ENCODE measurements at regions of chr1 and their contacts with region 1.

Region 1: DNA sequence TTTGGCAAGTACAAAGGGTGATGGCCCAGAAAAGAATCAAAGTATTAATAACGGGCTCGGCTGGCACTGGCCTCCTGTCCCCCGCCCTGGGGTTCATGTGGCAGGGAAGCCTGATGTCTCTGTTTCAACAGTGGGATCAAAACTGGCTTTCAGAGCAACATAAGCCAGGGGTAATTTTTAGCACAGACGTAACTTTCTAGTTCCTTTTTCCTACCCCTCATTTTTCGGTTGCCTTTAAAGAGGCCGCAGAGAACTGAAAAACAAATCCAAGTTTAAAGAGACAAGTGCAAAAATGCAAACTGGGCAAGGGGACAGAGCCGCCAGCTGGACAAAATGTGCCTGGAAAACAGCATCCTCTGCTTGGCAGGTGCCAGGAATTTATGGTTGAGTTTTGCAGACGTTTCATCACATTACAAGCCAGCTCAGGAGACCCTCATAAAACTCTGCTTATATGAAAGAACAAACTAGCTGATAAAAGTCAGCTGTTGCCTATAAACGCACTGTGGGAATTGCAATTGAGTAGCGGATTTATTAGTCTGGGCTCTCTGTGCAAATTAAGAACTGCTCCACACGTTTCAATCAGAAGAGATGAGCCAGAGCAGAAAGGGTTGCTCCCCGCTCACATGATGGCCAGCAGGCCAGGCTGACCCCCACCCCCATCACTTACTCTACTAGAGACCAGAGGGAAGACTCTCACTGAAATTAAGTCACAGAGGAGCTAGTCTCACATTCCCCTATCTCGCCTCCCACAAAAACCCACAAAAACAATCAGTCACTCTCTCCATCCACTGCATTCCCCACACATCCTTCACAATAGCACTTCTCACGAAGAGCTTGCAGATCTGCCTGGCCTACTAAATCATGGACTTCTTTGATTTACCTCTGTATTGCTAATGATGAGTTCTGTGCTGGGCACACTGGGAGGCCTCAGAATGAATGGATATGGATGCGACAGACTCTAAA is 15.8 kb upstream of the CDCA8 start:
- DNase-seq: no peak
- ATAC-seq: no peak
- H3K4me3 ChIP-seq: no peak overlapping the region
- H3K27ac ChIP-seq: no peak overlapping the region
- H3K4me1 ChIP-seq: no peaks in the 10 kb centered on the region
- H3K27me3 ChIP-seq: no peaks in the 10 kb centered on the region

Region 2: DNA sequence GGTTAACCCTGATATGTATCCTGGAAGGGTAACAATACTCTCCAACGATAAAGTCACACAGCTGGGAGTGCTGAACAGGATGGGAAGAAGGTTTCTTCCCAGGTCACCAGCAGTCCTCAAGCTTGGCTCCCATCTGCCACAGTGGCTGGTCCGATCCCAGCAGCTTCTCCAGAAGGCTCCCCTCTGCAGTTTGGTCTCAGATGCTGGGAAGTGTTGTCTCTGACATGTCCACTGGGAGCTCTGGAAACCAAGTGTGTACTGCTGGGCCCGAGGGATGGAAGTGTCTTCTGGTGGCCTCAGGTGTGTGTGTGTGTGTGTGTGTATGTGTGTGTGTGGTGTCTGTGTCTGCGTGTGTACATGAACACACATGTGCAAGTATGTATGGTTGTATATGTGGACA is 64.4 kb before region 1 on chr1:
- intact Hi-C with region 1: loop called in 1 of 4 experiments (anchors 10 kb)
- DNase-seq: no peak
- ATAC-seq: no peak
- H3K4me3 ChIP-seq: no peak overlapping the region
- H3K27ac ChIP-seq: no peak overlapping the region
- H3K4me1 ChIP-seq: no peaks in the 10 kb centered on the region
- H3K27me3 ChIP-seq: no peaks in the 10 kb centered on the region

Region 3: GRCh38 chr1:37817481-37817880 is 140.9 kb after region 1 on chr1:
- intact Hi-C with region 1: no loop called
- DNase-seq: peak in 2 of 3 donors; percentile 56 to 83
- ATAC-seq: no peak
- H3K4me3 ChIP-seq: no peak overlapping the region
- H3K27ac ChIP-seq: no peak overlapping the region
- H3K4me1 ChIP-seq: no peaks in the 10 kb centered on the region
- H3K27me3 ChIP-seq: no peaks in the 10 kb centered on the region